ENCODE measurements at regions of chr1 and their contacts with region 1.

Region 1: DNA sequence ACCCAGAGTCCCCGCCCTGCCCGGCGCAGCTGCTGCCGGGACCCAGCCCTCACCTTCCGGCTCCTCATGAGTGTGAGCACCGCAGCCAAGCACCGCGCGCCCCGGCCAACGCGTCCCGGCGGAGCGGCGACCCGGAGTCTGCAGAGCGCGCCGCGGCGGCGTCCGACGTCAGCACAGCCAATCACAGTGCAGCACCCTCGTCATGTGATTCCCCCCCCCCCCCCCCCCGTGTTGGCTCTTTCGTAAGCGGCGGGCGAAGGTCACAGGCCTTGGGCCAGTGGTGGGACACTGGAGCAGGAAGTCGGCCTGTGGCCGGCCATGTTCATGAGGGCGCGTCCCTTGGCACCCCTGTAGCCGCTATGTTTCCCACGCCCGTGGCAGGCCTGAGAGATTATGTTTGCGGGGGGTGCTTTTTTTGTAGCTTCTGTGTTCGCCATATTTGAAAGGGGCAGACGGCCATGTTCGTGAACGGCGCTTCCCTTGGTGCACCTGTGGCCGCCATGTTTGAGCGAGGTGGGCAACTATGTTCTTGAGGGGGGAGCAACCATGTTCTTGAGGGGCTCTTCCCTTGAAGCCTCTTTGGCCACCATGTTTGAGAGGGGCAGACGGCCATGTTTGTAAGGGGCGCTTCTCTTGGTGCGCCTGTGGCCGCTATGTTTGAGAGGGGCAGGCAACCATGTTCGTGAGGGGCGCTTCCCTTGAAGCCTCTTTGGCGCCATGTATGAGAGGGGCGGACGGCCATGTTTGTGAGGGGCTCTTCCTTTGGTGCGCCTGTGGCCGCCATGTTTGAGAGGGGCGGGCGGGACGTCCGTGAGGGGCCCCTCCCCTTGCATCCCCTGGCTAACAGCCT is at the start of gene C1orf174:
- DNase-seq: peak; percentile 97
- ATAC-seq: peak; percentile 78
- H3K4me3 ChIP-seq: peak within 1 kb of the TSS; percentile 85 to 97 (median 88)
- H3K27ac ChIP-seq: peak within 1 kb of the TSS; percentile 99
- H3K4me1 ChIP-seq: peaks cover 59% of the 10 kb centered on the region
- H3K27me3 ChIP-seq: no peaks in the 10 kb centered on the region; a peak in 1 of 5 replicates
- CTCF ChIP-seq: 0 out of 2 replicates have a peak, but pooled peaks have one; percentile 12
- EP300 ChIP-seq: peak; percentile 12 to 27; a peak in 1 of 4 replicates
- POLR2A ChIP-seq: peak in 1 of 2 experiments; percentile 85; a peak in 2 of 4 replicates
- RAD21 ChIP-seq: no peak
- total RNA-seq, gene C1orf174: 31.4 and 43.4 TPM in 2 replicates

Region 2: DNA sequence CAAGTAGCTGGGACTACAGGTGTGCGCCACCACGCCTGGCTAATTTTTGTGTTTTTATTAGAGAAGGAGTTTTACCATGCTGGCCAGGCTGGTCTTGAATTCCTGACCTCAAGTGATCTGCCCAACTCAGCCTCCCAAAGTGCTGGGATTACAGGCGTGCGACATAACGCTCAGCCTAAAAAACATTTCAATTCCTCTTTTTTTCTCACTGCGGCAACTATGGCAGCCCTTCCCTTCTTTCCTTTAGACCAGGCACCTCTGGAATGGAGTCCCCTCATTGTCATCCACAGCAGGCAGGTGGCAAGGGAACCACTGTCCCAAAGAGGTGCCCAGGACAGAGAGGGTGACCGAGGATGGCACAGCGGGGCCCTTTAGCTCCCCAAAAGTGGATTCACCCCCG is 57.4 kb before region 1 on chr1:
- CTCF ChIA-PET with region 1: no interaction called
- POLR2A ChIA-PET with region 1: no interaction called
- in situ Hi-C with region 1: no loop called
- intact Hi-C with region 1: no loop called
- DNase-seq: no peak
- ATAC-seq: no peak
- H3K4me3 ChIP-seq: no peak overlapping the region
- H3K27ac ChIP-seq: no peak overlapping the region
- H3K4me1 ChIP-seq: no peaks in the 10 kb centered on the region
- H3K27me3 ChIP-seq: no peaks in the 10 kb centered on the region
- CTCF ChIP-seq: no peak
- EP300 ChIP-seq: no peak
- POLR2A ChIP-seq: no peak
- RAD21 ChIP-seq: no peak

Region 3: GRCh38 chr1:3856908-3857790 is 43.2 kb before region 1 on chr1 and contains the starts of genes CEP104 and DFFB:
- CTCF ChIA-PET with region 1: no interaction called
- POLR2A ChIA-PET with region 1: interaction called, 10 read pairs
- in situ Hi-C with region 1: no loop called
- intact Hi-C with region 1: loop called (anchors 1 kb)
- DNase-seq: peak; percentile 98
- ATAC-seq: peak; percentile 93
- H3K4me3 ChIP-seq: peak within 1 kb of the TSS; percentile 83 to 98 (median 86)
- H3K27ac ChIP-seq: peak within 1 kb of the TSS; percentile 57
- H3K4me1 ChIP-seq: peaks cover 35% of the 10 kb centered on the region
- H3K27me3 ChIP-seq: no peaks in the 10 kb centered on the region; a peak in 1 of 5 replicates
- CTCF ChIP-seq: peak; percentile 94
- EP300 ChIP-seq: no peak
- POLR2A ChIP-seq: peak; percentile 22 to 81; a peak in 3 of 4 replicates
- RAD21 ChIP-seq: peak; percentile 75; the same call in 1 of the 2 replicates
- total RNA-seq, gene CEP104: 20.4 and 33.8 TPM in 2 replicates
- total RNA-seq, gene DFFB: 8.7 and 9.3 TPM in 2 replicates

Region 4: DNA sequence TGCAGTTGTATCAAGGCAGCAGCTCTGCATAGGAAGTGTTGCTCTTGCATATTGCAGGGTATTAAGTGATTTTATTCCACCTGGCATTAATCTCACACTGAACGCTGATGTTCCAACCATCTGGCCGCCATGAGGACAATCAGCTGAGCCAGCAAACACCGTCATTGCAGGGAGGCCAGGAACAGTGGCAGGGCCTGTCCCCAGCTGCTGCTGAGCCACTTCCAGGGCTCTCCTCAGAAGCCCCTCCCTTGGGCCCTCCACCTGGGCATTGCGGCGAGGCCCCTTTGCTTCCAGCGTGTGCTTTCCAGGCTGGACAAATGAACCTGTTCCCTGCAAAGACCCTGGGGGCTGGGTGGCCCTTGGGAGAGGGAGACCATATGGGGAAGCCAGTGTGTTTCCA is 171.3 kb after region 1 on chr1:
- CTCF ChIA-PET with region 1: no interaction called
- POLR2A ChIA-PET with region 1: no interaction called
- in situ Hi-C with region 1: loop called (anchors 25 kb)
- intact Hi-C with region 1: no loop called
- DNase-seq: no peak
- ATAC-seq: no peak
- H3K4me3 ChIP-seq: no peak overlapping the region
- H3K27ac ChIP-seq: no peak overlapping the region
- H3K4me1 ChIP-seq: no peaks in the 10 kb centered on the region
- H3K27me3 ChIP-seq: peaks cover 4 to 28% of the 10 kb centered on the region in 2 experiments
- CTCF ChIP-seq: no peak
- EP300 ChIP-seq: no peak
- POLR2A ChIP-seq: no peak
- RAD21 ChIP-seq: no peak

Measured in HepG2 (cell line).